Right ventricle myocardium inferior (tissue), 1 donor: ENCODE measurements at regions of chr1 and their contacts with region 1.

Region 1: GRCh38 chr1:221347706-221348105 is 394.2 kb downstream of the DUSP10 start:
- DNase-seq: no peak
- ATAC-seq: no peak

Region 2: DNA sequence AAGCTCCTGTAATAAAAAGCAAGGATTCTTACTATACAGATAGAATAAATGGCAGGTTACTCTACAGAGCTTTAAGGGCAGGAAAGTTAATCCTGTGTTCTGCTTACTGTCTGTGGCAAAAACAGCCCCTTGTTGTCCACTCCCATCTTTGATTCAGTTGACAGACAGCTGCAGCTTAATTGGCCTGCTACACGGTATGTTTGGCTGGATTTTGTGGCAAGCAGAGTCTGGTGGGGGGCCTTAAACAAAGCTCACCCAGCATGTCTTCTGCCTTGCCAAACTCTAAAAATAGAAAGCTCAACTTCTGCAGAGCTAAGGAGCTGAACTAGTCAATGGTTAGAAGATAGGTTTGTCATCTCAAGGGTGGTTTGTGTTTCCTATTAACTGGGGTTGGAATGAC is 61.3 kb before region 1 on chr1:
- intact Hi-C with region 1: loop called (anchors 2 kb)
- DNase-seq: no peak
- ATAC-seq: no peak

Region 3: DNA sequence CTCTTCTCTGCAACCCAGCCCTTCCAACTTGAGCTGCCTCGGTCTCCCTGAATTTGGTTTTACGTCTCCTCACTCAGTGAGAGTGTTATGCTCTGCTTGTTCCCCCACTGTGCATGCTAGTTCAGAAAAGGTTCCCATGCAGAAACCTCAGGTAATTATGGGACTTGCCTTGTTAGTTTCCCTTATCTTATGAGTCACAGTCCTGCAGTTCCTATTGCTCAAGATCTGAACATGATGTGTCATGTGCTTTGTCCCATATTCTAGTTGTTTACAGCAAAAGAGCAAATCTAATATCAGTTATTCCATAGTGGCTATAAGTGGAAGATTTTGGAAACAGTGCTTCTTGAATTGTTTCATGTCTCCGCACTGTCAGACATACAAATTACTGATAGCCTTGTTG is 319.8 kb after region 1 on chr1:
- intact Hi-C with region 1: no loop called
- DNase-seq: no peak
- ATAC-seq: no peak